Psoas muscle (tissue), 8 donors: ENCODE measurements at regions of chr2 and their contacts with region 1.

Region 1: DNA sequence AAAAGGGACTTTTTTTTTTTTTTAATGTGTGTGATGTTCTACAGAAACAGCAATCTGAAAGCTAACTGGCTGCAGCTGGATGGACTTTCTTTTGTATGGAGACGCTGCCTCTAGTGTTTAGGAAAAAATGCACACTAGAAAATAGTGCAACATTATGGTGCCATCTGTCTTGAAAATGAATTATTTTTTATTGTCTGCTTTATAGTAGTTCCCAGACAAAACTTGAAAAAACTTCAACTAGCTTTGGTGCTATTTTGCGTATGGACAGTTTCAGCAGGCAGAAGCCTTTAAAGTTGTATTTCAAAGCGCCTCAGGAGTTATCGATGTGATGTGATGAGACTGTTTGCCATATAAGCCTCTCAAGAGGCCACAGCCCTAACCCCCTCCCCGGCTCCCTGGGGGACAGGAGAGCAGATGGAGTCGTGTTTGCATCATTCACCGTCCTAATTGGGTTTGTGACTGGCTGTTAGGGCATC is 86.9 kb downstream of the LTBP1 start:
- DNase-seq: no peak
- ATAC-seq: peak; percentile 55 to 90 (median 75)
- H3K4me3 ChIP-seq: peak overlapping the region; percentile 31
- H3K27ac ChIP-seq: no peak overlapping the region
- H3K4me1 ChIP-seq: peaks cover 7% of the 10 kb centered on the region
- H3K27me3 ChIP-seq: no peaks in the 10 kb centered on the region
- CTCF ChIP-seq: peak; percentile 52

Region 2: GRCh38 chr2:32946314-32947075 is 87.1 kb before region 1 on chr2 and contains the start of gene LTBP1:
- intact Hi-C with region 1: loop called in 1 of 2 experiments (anchors 5 kb)
- DNase-seq: peak; percentile 65 to 85
- ATAC-seq: peak; percentile 91 to 97 (median 92)
- H3K4me3 ChIP-seq: peak within 1 kb of the TSS; percentile 91
- H3K27ac ChIP-seq: peak within 1 kb of the TSS; percentile 82
- H3K4me1 ChIP-seq: peaks cover 12% of the 10 kb centered on the region
- H3K27me3 ChIP-seq: no peaks in the 10 kb centered on the region
- CTCF ChIP-seq: peak; percentile 81
- total RNA-seq, gene LTBP1: 9.5 to 26.8 (median 15.4) TPM

Region 3: DNA sequence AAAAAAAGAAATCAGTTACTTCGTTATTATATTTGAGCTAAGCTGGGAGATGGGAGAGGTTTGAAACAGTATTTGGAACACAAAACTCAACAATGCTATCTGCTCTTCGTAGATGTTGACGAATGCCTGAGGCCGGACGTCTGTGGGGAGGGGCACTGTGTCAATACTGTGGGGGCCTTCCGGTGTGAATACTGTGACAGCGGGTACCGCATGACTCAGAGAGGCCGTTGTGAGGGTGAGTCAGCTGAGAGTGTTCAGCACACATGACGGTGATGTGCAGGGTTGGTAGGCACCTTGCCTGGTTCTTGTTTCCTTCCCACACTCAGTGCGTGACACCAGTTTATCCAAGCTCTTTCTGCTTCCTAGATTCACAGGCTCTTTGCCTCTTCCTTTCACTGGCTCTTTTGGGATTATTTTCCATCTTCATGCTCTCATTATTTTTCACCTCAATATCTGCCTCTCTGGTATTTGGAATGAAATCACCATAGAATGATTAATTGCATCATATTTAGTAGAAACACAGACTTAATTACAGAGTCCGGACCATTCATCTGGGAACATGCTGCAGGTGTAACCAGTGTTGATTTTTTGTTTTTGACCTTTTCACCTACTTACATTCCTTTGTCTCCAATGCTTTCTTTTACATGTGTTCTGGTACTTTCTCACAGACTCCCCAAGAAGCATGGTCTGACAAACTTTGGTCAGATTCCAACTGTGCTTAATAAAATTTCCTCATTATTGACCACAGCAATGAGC is 242.2 kb after region 1 on chr2:
- intact Hi-C with region 1: loop called in 1 of 2 experiments (anchors 5 kb)
- DNase-seq: peak; percentile 63 to 82
- ATAC-seq: peak; percentile 54 to 84 (median 70)
- H3K4me3 ChIP-seq: no peak overlapping the region
- H3K27ac ChIP-seq: no peak overlapping the region
- H3K4me1 ChIP-seq: peaks cover 6% of the 10 kb centered on the region
- H3K27me3 ChIP-seq: no peaks in the 10 kb centered on the region
- CTCF ChIP-seq: no peak

Region 4: DNA sequence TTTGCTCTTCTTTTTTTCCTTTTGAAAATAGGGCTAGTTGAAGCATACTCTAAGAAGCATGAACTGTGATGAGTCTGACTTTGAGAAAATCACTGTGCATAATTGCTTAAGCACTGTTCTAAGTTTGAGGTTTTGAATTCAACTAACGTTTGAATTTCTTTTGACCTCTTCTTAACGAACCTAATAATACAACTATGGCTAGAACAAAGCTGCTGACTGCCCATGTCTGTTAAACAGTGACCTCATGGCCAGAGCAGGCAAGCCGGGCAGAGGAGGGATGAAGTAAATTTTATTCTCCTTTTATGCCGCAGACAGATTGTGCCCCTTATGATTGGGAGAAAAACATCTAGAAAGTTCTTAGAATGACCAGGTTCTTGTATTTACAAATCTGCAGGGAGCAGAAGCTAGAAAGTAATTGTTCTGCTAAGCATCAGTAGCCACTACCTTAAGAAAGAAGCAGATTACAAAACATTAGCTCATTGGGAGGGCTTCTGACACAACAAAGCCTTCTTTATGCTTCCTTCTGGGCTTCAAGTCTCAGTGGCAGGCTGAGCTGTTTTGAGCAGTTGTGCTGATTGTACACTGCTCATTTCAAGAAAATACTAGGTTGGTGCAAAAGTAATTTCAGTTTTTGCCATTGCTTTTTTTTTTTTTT is 345.0 kb after region 1 on chr2:
- intact Hi-C with region 1: loop called (anchors 5 to 10 kb)
- DNase-seq: no peak
- ATAC-seq: peak in 1 of 4 donors; percentile 29
- H3K4me3 ChIP-seq: no peak overlapping the region
- H3K27ac ChIP-seq: no peak overlapping the region
- H3K4me1 ChIP-seq: no peaks in the 10 kb centered on the region
- H3K27me3 ChIP-seq: no peaks in the 10 kb centered on the region
- CTCF ChIP-seq: no peak